Activated CD8-positive, alpha-beta T cell treated with anti-CD3 and anti-CD28 coated beads for 36 hours (primary cell): ENCODE measurements at regions of chr20 and their contacts with region 1.

Region 1: GRCh38 chr20:36773597-36774390 is at the start of gene DSN1:
- DNase-seq: peak; percentile 98
- ATAC-seq: peak; percentile 89
- H3K4me3 Mint-ChIP-seq: peak within 1 kb of the TSS; percentile 92
- H3K27ac Mint-ChIP-seq: peak within 1 kb of the TSS; percentile 99
- H3K4me1 Mint-ChIP-seq: peaks cover 10% of the 10 kb centered on the region
- H3K27me3 Mint-ChIP-seq: no peaks in the 10 kb centered on the region
- CTCF ChIP-seq: no peak
- total RNA-seq, gene DSN1: 21.6 to 23.9 TPM

Region 2: DNA sequence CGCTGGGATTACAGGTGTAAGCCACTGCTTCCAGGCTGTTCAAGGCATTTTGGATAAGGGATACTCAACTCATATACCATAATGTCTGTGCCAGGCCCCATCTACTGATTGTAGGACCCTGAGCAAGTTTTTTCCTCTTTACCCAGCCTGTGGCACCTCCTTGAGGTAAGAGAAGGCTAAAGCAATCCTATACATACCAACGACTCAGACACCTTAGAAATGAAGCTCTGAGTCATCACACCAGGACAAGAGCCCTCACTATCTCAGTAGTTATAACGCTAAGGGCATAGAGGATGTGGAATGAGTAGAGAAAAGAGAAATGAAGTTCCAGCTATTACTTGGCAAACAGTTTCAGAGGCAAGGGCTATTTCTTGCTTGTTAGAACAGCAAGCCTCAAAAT is 44.8 kb before region 1 on chr20:
- CTCF ChIA-PET with region 1: interaction called, 12 read pairs
- POLR2A ChIA-PET with region 1: interaction called, 3 read pairs
- intact Hi-C with region 1: no loop called
- DNase-seq: peak; percentile 36
- ATAC-seq: peak; percentile 88
- H3K4me3 Mint-ChIP-seq: no peak overlapping the region
- H3K27ac Mint-ChIP-seq: no peak overlapping the region
- H3K4me1 Mint-ChIP-seq: peaks cover 17% of the 10 kb centered on the region
- H3K27me3 Mint-ChIP-seq: no peaks in the 10 kb centered on the region
- CTCF ChIP-seq: peak; percentile 37

Region 3: GRCh38 chr20:36741072-36741471 is 32.7 kb before region 1 on chr20:
- CTCF ChIA-PET with region 1: interaction called, 16 read pairs
- POLR2A ChIA-PET with region 1: no interaction called
- intact Hi-C with region 1: no loop called
- DNase-seq: no peak
- ATAC-seq: no peak
- H3K4me3 Mint-ChIP-seq: no peak overlapping the region
- H3K27ac Mint-ChIP-seq: no peak overlapping the region
- H3K4me1 Mint-ChIP-seq: peaks cover 16% of the 10 kb centered on the region
- H3K27me3 Mint-ChIP-seq: no peaks in the 10 kb centered on the region
- CTCF ChIP-seq: no peak

Region 4: DNA sequence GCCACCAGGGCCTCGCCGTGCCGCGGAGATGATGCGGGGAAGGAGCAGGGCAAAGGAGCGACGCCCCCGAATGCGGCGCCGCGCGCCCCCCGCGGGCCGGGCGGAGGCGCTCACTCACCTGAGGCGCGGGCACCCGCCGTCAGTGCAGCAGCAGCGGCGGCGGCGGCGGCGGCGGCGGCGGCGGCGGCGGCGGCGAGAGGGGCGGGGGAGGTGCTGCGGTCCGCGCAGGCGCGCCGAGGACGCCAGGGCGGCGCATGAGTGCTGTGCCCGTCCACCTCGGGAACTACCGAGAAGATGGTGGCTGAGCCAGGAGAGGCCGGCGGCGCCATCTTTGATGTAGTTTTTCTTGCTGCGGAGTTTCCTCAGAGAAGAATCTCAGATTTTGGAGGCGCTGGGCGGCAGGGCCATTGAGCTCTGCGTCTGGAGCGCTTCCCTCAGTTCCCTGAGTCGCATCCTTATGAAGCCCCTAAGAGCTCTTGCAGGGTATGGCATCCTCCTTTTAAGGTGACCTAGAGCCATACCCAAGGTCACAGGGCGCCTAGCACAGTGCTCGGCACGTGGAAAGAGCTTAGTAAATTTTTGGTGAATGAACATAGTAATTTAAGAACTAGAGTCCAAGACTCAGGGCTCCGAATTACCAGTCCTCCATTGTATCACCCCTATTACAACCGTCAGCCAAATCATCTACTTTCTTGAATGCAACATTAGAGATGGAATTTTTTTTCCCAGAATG is 27.7 kb before region 1 on chr20 and contains the start of gene NDRG3:
- CTCF ChIA-PET with region 1: interaction called, 16 read pairs
- POLR2A ChIA-PET with region 1: interaction called, 4 read pairs
- intact Hi-C with region 1: no loop called
- DNase-seq: peak; percentile 96
- ATAC-seq: peak; percentile 99
- H3K4me3 Mint-ChIP-seq: peak within 1 kb of the TSS; percentile 83
- H3K27ac Mint-ChIP-seq: peak within 1 kb of the TSS; percentile 89
- H3K4me1 Mint-ChIP-seq: peaks cover 16% of the 10 kb centered on the region
- H3K27me3 Mint-ChIP-seq: no peaks in the 10 kb centered on the region
- CTCF ChIP-seq: no peak
- total RNA-seq, gene NDRG3: 19.2 to 19.3 TPM

Region 5: GRCh38 chr20:36754656-36755222 is 19.1 kb before region 1 on chr20:
- CTCF ChIA-PET with region 1: interaction called, 15 read pairs
- POLR2A ChIA-PET with region 1: no interaction called
- intact Hi-C with region 1: no loop called
- DNase-seq: peak; percentile 41
- ATAC-seq: peak; percentile 83
- H3K4me3 Mint-ChIP-seq: no peak overlapping the region
- H3K27ac Mint-ChIP-seq: no peak overlapping the region
- H3K4me1 Mint-ChIP-seq: peaks cover 5% of the 10 kb centered on the region
- H3K27me3 Mint-ChIP-seq: no peaks in the 10 kb centered on the region
- CTCF ChIP-seq: peak; percentile 61

Region 6: GRCh38 chr20:36835453-36836198 is 61.8 kb after region 1 on chr20:
- CTCF ChIA-PET with region 1: interaction called, 12 read pairs
- POLR2A ChIA-PET with region 1: no interaction called
- intact Hi-C with region 1: no loop called
- DNase-seq: peak; percentile 93
- ATAC-seq: peak; percentile 96
- H3K4me3 Mint-ChIP-seq: peak overlapping the region; percentile 75
- H3K27ac Mint-ChIP-seq: peak overlapping the region; percentile 88
- H3K4me1 Mint-ChIP-seq: peaks cover 12% of the 10 kb centered on the region
- H3K27me3 Mint-ChIP-seq: no peaks in the 10 kb centered on the region
- CTCF ChIP-seq: no peak